Mucosa of descending colon (tissue), 3 donors: ENCODE measurements at regions of chr15 and their contacts with region 1.

Region 1: DNA sequence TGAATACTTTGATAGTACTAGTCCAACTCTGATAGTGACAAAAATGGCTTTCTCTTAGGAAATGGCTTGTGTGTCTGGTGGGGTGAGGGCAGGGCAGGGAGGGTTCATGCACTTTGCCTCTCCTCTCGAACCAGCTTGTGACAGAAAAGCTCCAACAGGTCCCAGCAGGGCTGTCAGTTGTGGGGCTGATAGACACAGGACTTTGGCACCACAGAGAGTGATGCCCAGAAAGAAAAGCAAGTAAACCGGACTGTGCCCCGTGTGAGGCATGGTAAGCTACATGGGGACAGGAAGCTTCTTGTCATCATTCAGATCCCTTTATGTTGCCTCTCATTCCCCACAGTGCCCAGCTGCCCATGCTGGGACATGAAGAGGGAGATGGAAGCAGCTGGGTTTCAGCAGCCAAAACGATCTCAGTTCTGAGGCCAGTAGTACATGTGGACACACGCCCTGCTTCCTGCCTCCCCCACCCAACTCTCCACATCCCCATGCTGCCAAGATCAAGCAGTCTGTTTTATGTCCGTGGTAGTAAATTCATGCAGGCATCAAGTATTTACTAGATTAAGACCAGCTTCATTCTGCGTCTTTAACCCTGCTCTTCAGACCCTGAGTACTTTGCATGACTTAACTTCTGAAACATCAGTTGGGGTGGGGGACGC is 29.7 kb upstream of the LIPC start:
- DNase-seq: no peak
- ATAC-seq: peak; percentile 13
- H3K4me3 ChIP-seq: no peak overlapping the region
- H3K4me1 ChIP-seq: no peaks in the 10 kb centered on the region
- CTCF ChIP-seq: no peak

Region 2: GRCh38 chr15:58019503-58020376 is 382.4 kb before region 1 on chr15:
- intact Hi-C with region 1: loop called in 1 of 2 experiments (anchors 10 kb)
- DNase-seq: no peak
- ATAC-seq: no peak
- H3K4me3 ChIP-seq: no peak overlapping the region
- H3K4me1 ChIP-seq: no peaks in the 10 kb centered on the region
- CTCF ChIP-seq: no peak